Cardiac septum (tissue), 1 donor: ENCODE measurements at regions of chr2 and their contacts with region 1.

Region 1: DNA sequence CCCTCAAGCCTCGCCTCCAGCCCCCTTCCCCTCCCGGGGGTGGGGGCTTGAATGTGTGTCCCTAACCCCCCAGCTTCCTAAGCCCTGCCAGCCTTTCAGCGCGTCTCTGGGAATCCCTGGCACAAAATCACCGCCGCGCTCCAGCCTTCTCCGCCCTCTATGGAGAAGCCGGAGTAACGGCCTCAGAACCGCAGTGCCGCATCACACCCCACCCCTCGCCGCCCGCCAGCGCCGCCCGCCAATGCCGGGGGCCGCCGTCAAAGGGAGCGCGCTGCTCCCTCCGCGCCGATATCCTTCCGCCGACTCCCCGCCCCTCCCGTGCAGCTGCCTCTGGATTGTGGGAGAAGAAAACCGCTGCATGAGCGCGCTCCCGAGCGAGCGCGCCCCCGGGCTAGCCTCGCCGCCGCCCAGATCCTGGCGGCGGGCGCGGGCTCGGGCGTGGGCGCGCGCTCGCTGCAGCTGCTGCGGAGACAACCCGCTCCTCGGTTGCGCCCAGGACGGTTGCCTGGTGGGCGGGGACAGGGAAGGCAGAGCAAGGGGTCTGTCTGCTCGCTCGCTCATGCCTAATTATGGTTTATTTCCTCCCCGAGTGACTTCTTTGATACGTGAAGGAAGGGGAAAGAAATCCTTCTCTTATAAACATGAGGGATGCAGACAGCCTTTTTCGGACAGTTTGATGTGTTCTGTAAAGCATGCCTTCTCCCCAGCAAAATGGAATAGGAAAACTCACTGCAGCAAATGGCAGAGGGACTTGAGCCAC is at the start of gene CCDC88A:
- DNase-seq: peak; percentile 96
- total RNA-seq, gene CCDC88A: 29.1 TPM

Region 2: DNA sequence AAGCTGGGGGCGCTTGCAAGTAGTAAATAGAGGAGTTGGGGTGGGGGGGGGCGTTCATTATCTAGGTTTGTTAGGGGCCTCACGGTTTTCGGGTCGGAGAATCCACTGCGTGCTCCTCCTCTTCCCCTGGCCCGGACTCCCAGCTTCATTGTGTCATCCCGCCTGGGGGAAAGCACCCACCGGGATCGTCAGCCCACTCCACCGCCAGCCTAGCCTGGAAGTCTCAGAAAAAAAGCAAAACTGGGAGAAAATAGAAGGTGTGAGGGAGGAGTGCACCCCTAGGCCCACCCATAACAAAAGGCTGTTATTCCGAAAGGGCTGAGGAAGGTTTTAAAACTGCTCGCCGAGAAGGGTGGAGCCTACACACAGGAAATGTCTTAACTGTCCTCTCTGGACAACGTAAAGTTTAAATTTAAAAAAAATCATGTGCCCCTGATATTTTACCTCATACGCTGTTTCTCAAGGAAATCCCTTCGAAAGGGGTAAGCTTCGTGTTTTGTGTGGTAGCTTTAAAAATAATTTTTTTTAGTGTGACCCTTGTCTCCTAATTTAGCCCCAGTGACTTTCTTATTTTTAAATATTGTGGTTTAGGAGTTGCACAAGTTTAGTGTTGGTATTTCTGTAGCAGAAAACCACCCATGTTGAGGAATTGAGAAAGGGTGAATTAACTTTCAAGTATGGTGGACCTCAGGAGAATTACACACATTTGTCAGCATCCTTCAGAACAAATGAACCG is 859.5 kb before region 1 on chr2:
- intact Hi-C with region 1: no loop called
- DNase-seq: peak; percentile 78

Region 3: GRCh38 chr2:55223958-55224760 is 195.7 kb before region 1 on chr2:
- intact Hi-C with region 1: loop called (anchors 5 kb)
- DNase-seq: no peak

Region 4: GRCh38 chr2:55232084-55232862 is 187.6 kb before region 1 on chr2 and contains the starts of genes CLHC1 and RPS27A:
- intact Hi-C with region 1: loop called (anchors 5 kb)
- DNase-seq: peak; percentile 96
- total RNA-seq, gene CLHC1: 8.6 TPM
- total RNA-seq, gene RPS27A: 395 TPM

Region 5: DNA sequence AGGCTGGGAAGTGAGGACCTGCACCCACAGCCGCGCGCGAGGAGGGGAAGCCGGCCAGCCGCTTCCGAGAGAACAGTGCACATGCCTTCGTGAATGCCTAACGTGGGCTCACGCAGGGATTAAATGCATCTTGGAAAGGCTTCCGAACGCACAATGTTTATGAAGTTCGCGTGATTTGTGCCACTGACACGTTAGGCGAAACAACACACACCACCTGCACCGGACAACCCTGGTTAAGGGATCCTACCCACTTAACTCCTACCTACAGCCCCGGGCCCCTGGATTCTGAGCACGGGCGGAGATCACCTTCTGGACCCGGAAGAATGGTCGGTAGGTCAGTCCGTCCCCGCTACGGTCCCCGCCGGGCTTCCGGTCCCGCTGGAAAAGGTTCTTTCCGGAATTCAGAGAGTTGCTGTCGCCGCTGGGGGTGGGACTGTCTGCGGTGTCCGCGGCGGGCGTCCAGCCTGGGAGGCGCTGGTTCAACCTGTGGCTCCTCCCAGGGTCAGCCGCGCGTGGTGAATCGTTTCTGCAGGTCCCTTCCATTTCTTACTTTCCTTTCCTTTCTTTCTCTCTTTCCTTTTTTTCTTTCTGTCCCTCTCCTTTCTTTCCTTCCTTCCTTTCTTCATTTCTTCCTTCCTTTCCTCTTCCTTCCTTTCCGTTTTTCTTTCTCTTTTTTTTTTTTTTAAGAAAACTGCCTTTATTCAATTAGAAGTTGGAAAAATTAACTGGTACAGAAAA is 150.8 kb before region 1 on chr2 and contains the start of gene MTIF2:
- intact Hi-C with region 1: loop called (anchors 1 kb)
- DNase-seq: peak; percentile 97
- total RNA-seq, gene MTIF2: 40.8 TPM

Region 6: GRCh38 chr2:55282110-55282917 is 137.5 kb before region 1 on chr2:
- intact Hi-C with region 1: loop called (anchors 5 kb)
- DNase-seq: peak; percentile 97

Region 7: DNA sequence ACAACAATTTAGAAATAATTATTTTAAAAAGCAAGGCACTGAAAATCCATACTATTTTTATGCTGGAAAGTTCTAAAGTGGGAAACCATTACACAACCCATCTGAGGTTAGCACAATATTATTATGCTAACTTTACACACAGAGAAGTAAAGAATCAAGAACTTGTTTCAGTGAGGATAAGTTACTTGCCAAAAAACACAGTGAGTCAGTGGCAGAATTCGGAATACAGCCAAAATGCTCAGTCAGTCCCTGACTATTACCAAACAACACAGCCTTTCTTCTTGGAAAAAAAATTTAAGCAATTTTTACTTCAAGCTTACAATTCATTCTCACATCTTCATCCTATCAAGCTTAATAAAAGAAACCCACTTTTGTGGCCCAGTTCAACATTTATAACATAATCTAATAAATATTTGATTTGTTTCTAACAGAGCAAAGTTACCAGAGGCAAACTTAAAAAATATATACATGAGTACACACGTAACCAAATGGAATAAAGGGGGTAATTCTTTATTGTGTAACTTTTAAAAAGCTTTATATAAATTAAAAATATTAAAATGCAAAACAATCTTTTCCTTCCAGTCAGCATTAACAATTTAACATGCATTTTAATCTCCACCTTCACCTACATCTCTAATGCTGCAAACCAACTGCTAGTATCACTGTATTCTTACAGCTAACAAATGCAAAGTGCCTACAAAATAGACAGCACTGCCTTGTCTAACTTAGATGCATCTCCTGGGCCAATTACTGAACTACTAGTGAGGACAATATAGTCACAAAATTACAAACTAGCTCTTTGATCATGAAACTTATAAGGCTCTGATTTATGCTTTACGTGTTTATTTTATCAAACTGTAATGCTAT is 55.4 kb before region 1 on chr2:
- intact Hi-C with region 1: loop called (anchors 2 kb)
- DNase-seq: no peak

Region 8: GRCh38 chr2:55519938-55520885 is 100.4 kb after region 1 on chr2:
- intact Hi-C with region 1: loop called (anchors 2 kb)
- DNase-seq: no peak